A673 (cell line): ENCODE measurements at regions of chr6 and their contacts with region 1.

Region 1: DNA sequence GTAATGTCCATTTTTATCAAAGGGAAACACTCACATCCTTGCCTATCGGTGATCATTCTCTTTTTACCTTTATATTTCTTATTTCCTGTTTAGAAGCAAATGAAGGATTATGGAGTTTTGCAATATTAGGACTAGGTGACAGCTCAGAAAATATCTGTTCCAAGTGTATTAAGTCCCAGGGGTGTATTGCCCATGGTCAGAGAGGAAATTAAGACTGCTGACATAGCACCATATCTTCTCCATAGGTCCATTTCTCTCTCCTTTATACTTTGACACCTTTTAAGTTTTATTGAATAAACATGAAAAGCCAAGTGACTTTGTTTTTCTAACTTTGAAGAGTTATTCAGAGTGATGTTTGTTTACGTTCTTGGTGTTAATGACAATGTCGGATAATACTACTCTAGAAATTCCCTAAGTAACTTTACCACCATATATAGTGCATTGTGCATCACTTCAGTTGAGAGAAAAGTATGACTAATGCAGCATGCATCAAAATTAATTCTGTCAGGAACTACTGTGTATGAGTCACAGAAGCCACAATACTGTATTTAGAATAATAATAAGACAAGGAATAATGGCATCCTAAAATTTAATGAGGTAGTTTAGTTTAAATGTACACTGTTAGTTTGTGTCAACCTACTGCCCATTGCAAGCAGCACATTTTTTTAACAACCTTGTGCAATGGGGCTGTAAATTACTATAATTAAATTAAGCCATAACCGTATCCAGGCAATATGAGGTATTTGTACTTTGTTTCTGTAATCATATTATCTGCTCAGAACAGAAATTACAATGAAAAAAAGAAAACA is 474.4 kb upstream of the RNF217 start:
- DNase-seq: peak; percentile 78
- H3K4me3 ChIP-seq: no peak overlapping the region
- H3K27ac ChIP-seq: no peak overlapping the region
- H3K4me1 ChIP-seq: peaks cover 23% of the 10 kb centered on the region
- H3K27me3 ChIP-seq: no peaks in the 10 kb centered on the region
- CTCF ChIP-seq: no peak

Region 2: GRCh38 chr6:123288649-123289048 is 1199.2 kb before region 1 on chr6:
- CTCF ChIA-PET with region 1: no interaction called
- POLR2A ChIA-PET with region 1: interaction called, 13 read pairs
- intact Hi-C with region 1: no loop called
- DNase-seq: no peak
- H3K4me3 ChIP-seq: no peak overlapping the region
- H3K27ac ChIP-seq: no peak overlapping the region
- H3K4me1 ChIP-seq: no peaks in the 10 kb centered on the region
- H3K27me3 ChIP-seq: no peaks in the 10 kb centered on the region
- CTCF ChIP-seq: no peak

Region 3: DNA sequence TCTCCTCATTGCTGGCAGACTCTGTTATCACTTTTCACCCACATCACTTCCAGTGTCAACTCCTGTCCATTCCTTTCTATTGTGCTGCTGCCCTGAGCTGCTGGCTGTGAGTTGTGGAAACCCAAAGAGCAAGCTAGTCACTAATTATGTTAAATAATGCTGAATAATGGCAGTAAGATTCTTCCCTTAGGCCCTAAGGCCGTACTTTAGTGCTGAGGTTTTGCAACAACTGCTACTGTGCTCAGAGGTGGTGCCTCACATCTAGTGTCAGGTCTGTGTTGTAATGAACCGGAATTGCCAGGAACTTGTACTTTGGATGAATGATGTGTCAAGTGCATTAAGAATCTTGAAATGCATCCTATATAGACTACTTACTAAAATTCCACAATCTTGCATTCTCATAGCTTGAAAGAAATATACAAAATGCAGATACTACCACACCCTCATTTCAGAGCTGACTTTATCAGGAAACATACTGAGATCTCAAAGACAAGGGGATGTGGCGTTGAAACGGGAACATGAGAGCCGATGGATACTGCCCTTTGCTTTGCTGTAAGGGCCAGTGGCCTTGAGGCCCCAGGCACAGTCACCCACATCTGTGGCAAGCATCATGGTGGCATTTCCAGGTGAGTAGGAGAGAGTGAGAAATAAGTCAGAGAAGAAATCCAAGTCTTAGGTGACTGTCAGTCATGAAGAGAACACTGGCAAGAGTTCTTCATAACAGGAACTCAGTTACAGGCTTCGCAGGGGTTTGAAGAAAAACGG is 102.4 kb after region 1 on chr6:
- CTCF ChIA-PET with region 1: no interaction called
- POLR2A ChIA-PET with region 1: no interaction called
- intact Hi-C with region 1: no loop called
- DNase-seq: no peak
- H3K4me3 ChIP-seq: no peak overlapping the region
- H3K27ac ChIP-seq: no peak overlapping the region
- H3K4me1 ChIP-seq: no peaks in the 10 kb centered on the region
- H3K27me3 ChIP-seq: no peaks in the 10 kb centered on the region
- CTCF ChIP-seq: no peak

Region 4: DNA sequence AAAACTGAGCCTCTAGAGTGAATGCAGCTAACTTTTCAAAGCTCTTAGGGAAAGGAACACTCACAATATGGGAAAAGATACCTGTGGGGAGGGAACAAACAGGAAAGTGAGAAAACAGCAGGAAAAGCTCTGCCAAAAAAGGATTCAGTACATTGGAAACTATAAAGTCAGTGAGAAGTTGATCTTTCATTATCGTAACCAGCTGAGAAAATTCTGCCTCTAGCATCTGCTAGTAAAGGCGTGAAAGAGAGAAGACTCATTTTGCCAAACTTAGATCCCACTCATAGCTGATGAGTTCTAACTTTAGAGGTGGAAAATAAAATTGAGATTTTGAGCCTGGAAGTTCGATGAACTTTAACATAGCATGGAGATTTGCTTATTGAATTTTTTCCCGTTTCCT is 152.6 kb after region 1 on chr6:
- CTCF ChIA-PET with region 1: no interaction called
- POLR2A ChIA-PET with region 1: interaction called, 12 read pairs
- intact Hi-C with region 1: no loop called
- DNase-seq: no peak
- H3K4me3 ChIP-seq: no peak overlapping the region
- H3K27ac ChIP-seq: no peak overlapping the region
- H3K4me1 ChIP-seq: no peaks in the 10 kb centered on the region
- H3K27me3 ChIP-seq: no peaks in the 10 kb centered on the region
- CTCF ChIP-seq: no peak

Region 5: GRCh38 chr6:124661097-124661661 is 173.4 kb after region 1 on chr6:
- CTCF ChIA-PET with region 1: no interaction called
- POLR2A ChIA-PET with region 1: no interaction called
- intact Hi-C with region 1: no loop called
- DNase-seq: no peak
- H3K4me3 ChIP-seq: no peak overlapping the region
- H3K27ac ChIP-seq: no peak overlapping the region
- H3K4me1 ChIP-seq: peaks cover 5% of the 10 kb centered on the region
- H3K27me3 ChIP-seq: no peaks in the 10 kb centered on the region
- CTCF ChIP-seq: no peak

Region 6: DNA sequence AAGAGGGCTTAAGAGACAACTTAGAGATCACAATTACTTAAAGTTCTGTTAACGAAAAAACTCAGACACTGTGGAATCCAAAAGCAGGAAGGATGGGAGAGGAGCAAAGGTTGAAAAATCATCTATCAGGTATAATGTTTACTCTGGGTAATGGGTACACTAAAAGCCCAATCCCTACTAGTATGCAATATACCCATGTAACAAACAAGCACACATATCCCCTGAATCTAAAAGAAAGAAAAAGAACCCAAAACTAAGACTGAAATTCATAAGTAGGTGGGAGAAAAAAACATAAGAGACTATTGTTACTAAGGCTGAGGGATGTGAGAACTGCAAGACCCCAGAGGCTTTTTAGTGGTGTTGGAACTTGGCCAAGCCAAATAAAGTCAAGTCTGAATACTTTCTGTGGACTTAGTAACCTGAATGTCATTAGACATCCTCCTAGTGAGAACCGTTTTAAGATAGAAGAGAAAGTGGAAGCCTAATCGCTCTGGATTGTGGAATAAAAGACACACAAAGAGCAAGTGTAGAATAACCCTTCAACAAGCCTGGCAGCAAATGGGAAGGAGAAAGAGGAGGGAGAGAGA is 285.0 kb after region 1 on chr6:
- CTCF ChIA-PET with region 1: no interaction called
- POLR2A ChIA-PET with region 1: no interaction called
- intact Hi-C with region 1: loop called (anchors 10 kb)
- DNase-seq: peak; percentile 54
- H3K4me3 ChIP-seq: no peak overlapping the region
- H3K27ac ChIP-seq: peak overlapping the region; percentile 8
- H3K4me1 ChIP-seq: peaks cover 78% of the 10 kb centered on the region
- H3K27me3 ChIP-seq: no peaks in the 10 kb centered on the region
- CTCF ChIP-seq: no peak